Left colon (tissue), 2 donors: ENCODE measurements at regions of chr6 and their contacts with region 1.

Region 1: GRCh38 chr6:70884074-70884983 is 72.5 kb downstream of the B3GAT2 start:
- DNase-seq: peak in 1 of 2 donors; percentile 43
- ATAC-seq: peak; percentile 65

Region 2: DNA sequence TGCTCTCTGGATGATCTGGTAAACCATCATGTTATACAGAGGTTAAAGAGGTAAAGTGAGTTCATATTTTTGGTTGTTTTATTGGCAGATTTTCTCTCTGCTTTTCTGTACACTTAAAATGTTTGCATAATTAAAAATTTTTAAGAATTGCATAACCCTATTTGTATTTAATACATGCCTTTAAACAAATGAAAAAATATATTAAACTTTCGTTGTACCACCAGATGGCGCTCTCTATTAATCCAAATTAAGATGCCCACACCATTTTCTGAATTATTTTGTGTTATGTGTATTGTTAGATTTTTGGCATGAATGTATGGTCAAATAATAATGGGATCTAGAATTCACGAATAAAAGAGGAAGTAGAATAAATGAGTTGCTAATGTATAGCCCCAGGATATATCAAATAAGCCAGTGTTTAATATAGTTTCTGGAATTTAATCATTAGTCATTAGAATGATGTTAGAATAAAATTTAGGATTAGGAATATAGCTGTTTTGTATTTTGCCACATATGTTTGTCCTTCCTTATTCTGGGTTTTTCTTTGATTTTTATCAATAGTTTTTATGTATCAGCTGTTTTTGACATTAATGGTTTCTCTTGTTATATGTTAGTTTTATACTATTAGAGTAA is 177.7 kb before region 1 on chr6:
- intact Hi-C with region 1: loop called in 1 of 2 experiments (anchors 2 kb)
- DNase-seq: no peak
- ATAC-seq: no peak